ENCODE measurements at regions of chr14 and their contacts with region 1.

Region 1: DNA sequence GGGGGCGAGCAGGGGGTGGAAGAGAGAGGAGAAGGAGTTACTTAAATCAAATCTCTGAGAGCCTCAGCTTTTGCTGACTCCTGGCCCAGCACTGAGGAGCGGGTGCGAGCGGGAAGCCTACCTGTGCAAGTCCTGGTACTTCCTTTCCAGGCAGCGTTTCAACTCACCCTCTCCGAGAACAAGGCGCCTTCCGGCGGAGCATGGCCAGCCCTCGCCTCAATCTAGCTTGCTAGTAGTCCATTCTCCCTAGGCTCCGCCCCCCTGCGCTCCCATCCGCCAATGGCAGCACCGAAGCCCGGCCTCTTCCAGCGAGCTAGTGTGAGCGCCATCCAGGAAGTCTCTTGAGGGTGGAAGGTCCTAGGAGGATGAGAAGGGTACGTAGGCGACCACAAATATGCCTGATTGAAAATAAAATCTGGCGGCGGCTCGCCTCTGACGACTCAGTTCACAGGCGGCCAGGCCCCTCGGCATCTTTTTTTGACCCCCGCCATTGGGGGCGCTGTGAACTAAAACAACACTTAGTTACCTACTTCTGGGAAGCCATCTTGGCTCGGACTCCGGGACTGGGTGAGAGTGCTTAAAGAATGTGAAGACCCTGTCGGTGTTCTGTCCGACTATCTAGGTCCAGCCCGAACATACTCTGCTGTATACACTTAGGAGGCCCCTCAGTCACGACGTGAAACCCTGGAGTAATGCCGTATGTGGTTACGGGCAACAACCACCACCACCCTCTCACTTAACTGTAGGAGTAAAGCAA is at the start of gene CHD8:
- DNase-seq: peak; percentile 98
- CTCF ChIP-seq: peak; percentile 73

Region 2: DNA sequence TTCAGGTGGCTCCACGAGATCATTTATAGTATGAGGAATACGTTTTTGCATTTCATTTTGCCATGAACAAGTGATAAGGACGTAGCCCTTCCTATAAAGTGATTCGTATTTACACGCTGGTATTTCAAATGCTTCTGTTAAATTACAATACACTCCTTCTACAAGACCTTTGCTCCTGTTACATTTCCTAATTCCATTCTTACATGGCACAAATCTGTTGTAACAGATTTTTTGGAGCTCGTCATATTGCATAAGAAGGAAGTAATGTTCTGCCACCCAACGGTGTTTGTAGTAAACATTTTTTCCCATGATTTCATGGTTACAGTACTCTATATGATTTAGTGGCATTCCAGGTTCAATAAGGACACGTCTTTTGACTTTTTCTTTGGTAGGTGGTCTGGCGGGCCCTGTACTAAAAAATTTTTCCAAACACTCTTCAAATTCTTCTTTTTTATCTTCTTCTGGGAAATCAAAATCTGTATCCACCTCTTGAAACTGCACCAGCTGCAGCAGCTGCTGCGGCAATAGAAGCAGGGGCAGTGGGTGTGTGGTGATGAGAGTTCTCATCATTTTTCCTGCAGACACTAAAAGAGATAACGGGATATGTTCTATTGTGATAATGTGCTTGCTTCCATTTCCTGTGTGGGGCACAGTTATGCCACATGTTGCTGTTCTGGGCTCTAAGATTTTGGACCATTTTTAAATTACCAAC is 899.4 kb before region 1 on chr14:
- CTCF ChIA-PET with region 1: no interaction called
- POLR2A ChIA-PET with region 1: no interaction called
- DNase-seq: no peak
- CTCF ChIP-seq: no peak

Region 3: DNA sequence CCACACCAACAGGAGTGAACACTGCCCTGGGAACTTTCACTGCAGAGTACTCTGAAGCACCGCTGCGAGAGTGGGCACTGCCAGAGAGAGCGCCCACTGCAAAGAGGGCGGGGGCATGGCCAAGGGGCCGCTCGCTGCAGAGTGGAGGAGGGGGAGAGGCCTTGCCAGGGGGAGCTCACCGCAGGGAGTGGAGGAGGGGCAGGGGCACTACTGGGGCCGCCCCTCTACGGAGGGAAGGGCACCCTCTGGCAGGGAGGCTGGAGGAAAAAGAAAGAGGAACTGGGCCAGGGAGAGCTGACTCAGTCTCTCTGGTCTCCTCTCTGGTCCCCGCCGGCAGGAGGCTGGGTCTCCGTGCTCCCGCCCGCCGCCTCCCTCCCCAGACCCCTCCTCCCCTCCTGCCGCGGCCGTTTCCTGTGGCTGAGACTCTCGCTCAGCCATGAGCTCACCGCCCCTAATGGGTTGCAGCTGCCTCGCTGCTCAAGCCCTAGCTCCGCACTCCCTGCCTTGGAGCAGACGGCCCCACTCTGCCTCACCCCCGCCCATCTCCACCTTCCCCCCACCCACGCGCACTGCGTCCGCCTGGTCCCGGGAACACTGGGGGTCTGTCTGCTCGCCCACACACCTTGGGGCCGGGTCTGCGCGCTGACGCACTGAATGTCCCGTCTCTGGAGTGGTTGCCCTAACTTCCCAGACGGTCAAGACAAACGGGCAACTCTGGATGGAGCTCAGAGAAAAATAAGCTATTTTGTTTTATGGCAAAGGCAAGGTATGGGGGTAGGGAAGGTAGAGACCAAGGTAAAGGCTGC is 384.7 kb before region 1 on chr14:
- CTCF ChIA-PET with region 1: no interaction called
- POLR2A ChIA-PET with region 1: no interaction called
- DNase-seq: peak; percentile 88
- CTCF ChIP-seq: no peak

Region 4: GRCh38 chr14:21467616-21468015 is 11.5 kb after region 1 on chr14:
- CTCF ChIA-PET with region 1: interaction called, 18 read pairs
- POLR2A ChIA-PET with region 1: interaction called, 3 read pairs
- DNase-seq: no peak
- CTCF ChIP-seq: no peak

Region 5: DNA sequence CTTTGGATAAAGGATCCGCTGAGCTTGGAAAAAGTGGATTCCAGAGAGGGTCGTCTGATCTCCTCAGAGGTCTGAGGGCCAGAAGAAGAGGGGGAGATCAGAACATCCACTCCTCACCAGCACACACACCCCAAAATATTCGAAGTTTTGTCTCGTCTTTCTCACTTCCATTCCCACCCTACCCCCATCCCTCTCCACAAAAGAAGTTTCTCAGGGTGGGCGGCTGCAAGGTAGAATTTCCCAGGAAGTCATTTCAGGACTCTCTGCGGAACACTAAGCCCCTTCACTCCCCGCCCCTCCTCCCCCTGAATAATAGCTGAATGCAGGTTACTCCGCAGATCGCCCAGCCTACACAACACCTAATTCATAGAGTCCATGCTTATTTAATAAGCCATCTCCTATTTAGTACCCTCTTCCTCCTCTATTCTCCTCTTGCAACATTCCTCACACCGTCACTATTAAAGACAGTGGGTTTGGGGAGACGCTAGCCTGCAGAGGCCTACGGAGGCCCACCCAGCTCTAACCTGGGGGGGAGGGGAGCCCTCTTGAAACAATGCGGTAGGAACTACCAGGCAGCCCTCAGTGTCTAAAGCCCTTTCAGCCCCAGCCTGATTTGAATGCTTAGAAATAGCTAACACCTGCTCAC is 70.7 kb after region 1 on chr14:
- CTCF ChIA-PET with region 1: no interaction called
- POLR2A ChIA-PET with region 1: no interaction called
- DNase-seq: peak; percentile 25
- CTCF ChIP-seq: no peak

Measured in GM10248 (cell line).